ENCODE measurements at regions of chr15 and their contacts with region 1.

Region 1: GRCh38 chr15:64841258-64842095 is at the start of gene PLEKHO2:
- DNase-seq: peak; percentile 98 to 99 (median 99)
- ATAC-seq: peak; percentile 89 to 92
- H3K4me3 ChIP-seq: peak within 1 kb of the TSS; percentile 90
- H3K27ac ChIP-seq: peak within 1 kb of the TSS; percentile 84
- H3K4me1 ChIP-seq: peaks cover 8% of the 10 kb centered on the region
- H3K27me3 ChIP-seq: no peaks in the 10 kb centered on the region
- total RNA-seq, gene PLEKHO2: 11.6 to 22.3 (median 13.8) TPM

Region 2: DNA sequence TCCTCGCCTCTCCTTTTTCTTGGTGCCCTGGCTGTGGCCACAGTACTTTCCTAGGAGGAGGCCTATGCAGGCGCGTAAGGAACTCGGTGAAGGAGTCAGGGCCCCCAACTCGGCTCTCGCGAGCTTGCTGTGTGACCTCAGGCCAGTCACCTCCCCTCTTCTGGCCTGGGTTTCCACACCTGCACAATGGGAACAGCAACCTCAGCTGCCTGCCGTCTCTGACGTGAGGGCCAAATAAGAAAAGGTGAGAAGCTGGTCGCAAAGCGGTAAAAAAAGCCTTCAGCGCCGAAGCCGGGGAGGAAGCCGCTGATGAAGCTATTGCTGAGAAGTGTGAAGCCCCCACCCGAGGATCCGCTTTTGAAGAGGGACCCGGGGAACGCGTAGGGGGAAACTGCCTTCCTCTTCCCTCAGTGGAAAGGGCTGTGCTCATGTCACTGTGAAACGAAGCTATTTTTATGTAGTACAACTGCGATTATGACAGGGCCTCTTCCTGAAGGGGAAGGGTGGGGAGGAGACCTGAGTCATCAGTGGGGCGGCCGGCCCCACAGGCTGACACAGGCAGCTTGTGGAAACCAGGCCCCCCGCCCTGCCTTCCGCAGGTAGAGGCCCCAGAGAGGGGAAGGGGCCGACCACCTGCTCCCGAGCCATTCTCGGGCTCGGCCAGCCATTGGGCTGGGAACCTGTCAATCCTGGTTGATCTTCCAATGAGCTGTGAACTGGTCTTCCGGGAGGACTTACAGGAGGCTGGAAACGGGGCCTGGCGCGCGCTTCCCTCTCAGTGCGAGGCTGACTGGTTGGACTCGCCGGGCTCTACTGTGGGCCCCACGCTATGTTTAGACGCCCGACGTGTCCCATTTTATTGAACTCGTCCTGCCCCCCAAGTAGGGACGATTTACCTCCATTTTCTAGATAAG is 52.3 kb after region 1 on chr15:
- intact Hi-C with region 1: loop called (anchors 5 to 10 kb)
- DNase-seq: peak; percentile 95 to 98 (median 97)
- ATAC-seq: peak; percentile 84 to 86
- H3K4me3 ChIP-seq: peak overlapping the region; percentile 17
- H3K27ac ChIP-seq: peak overlapping the region; percentile 89
- H3K4me1 ChIP-seq: peaks cover 19% of the 10 kb centered on the region
- H3K27me3 ChIP-seq: no peaks in the 10 kb centered on the region

Region 3: DNA sequence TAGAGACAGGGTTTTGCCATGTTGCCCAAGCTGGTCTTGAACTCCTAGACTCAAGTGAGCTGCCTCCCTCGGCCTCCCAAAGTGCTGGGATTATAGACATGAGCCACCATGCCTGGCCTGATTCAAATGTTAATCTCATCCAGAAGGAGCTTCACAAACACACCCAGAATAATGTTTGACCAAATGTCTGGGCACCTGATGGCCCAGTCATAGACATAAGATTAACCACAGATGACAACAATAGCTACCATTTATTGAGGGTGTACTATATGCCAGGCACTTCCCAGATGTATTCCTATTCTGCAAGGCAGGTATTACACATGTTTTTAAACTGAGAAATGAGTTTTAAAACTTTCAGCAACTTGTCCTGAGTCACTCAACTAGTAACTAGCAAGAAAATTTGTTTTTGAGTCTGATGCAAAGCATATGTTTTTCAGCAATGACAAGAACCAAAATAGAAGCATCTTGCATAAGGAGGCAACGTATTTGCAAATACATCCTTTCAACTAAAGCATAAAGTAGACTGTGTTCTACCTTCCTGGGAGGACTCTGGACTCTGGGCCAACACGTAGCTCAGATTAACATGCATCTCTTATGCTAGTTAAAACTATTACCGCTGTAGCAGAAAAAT is 156.4 kb after region 1 on chr15:
- intact Hi-C with region 1: no loop called
- DNase-seq: no peak
- ATAC-seq: no peak
- H3K4me3 ChIP-seq: no peak overlapping the region
- H3K27ac ChIP-seq: no peak overlapping the region
- H3K4me1 ChIP-seq: no peaks in the 10 kb centered on the region
- H3K27me3 ChIP-seq: no peaks in the 10 kb centered on the region

Measured in right cardiac atrium (tissue), 5 donors.